ENCODE measurements at regions of chr16 and their contacts with region 1.

Region 1: GRCh38 chr16:84617791-84618580 is at the start of gene COTL1:
- DNase-seq: peak; percentile 98
- ATAC-seq: peak; percentile 84
- total RNA-seq, gene COTL1: 51.8 to 71.0 TPM

Region 2: DNA sequence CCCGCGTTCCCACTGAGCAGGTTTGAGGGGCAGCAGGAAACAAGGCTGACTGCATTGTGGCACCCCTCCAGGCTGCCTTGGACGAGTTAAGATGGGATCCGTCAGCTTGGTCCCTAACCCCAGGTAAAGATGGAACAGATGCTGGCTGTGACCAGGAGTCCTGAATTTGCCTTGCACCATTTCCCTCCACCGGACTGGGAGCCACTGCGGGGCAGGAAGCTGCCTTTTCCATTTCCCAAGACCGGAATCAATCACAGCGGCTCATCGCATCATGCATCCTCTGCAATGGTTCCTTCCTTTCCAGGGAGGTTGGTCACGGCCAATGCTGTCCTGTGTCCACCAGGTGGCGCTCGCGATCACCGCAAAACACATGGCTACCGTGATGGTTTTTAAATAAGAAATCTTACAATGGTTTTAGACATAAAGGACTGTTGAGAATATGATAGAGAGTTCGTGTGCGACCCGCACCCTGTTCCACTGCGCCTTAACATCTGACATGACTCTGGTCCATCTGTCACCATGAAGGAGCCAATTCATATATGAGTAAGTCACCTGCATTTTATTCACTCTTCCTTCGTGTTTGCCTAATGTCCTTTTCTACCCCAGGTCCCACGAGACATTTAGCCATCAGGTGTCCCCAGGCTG is 106.7 kb before region 1 on chr16:
- intact Hi-C with region 1: loop called (anchors 2 to 5 kb)
- DNase-seq: peak; percentile 61 to 89
- ATAC-seq: peak; percentile 80

Region 3: GRCh38 chr16:84672276-84673202 is 54.6 kb after region 1 on chr16:
- intact Hi-C with region 1: no loop called
- DNase-seq: peak; percentile 60 to 85
- ATAC-seq: peak; percentile 88

Measured in left colon (tissue), 2 donors.